Right ventricle myocardium inferior (tissue), 1 donor: ENCODE measurements at regions of chr16 and their contacts with region 1.

Region 1: GRCh38 chr16:68237243-68238028 is 1.5 kb upstream of the ESRP2 start:
- DNase-seq: peak; percentile 98
- ATAC-seq: peak; percentile 95

Region 2: GRCh38 chr16:68257906-68258800 is 20.7 kb after region 1 on chr16:
- intact Hi-C with region 1: loop called (anchors 2 kb)
- DNase-seq: no peak
- ATAC-seq: peak; percentile 40

Region 3: GRCh38 chr16:68328151-68328859 is 90.9 kb after region 1 on chr16:
- intact Hi-C with region 1: loop called (anchors 1 kb)
- DNase-seq: peak; percentile 88
- ATAC-seq: peak; percentile 92